ENCODE measurements at regions of chr5 and their contacts with region 1.

Region 1: GRCh38 chr5:137393196-137393993 is 105.7 kb downstream of the SPOCK1 start:
- DNase-seq: peak; percentile 92
- H3K4me3 ChIP-seq: no peak overlapping the region
- H3K27ac ChIP-seq: no peak overlapping the region
- H3K4me1 ChIP-seq: peaks cover 24% of the 10 kb centered on the region
- H3K27me3 ChIP-seq: no peaks in the 10 kb centered on the region
- CTCF ChIP-seq: no peak

Region 2: GRCh38 chr5:137415231-137415681 is 21.9 kb after region 1 on chr5:
- CTCF ChIA-PET with region 1: no interaction called
- dilution Hi-C with region 1: no loop called
- in situ Hi-C with region 1: no loop called
- intact Hi-C with region 1: no loop called
- DNase-seq: peak; percentile 75
- H3K4me3 ChIP-seq: no peak overlapping the region
- H3K27ac ChIP-seq: peak overlapping the region; percentile 28
- H3K4me1 ChIP-seq: peaks cover 15% of the 10 kb centered on the region
- H3K27me3 ChIP-seq: no peaks in the 10 kb centered on the region
- CTCF ChIP-seq: no peak

Region 3: DNA sequence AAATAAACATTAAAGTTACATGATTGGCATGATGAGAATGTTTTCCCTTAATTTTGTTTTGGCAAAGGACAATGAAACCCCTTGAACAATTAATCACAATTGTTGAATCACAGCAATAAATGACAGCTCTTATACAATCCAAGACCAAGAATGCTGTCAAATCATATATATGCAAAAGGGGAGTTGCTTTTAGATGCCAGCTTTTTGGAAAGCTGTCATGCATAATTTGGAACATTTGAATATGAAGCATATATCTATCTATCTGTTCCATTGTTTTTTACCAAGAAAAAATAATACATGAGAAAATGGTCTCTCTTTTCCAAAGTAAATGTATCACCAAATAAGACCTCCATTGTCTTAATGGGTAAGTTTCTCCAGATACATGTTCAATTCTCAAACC is 61.3 kb after region 1 on chr5:
- CTCF ChIA-PET with region 1: no interaction called
- dilution Hi-C with region 1: no loop called
- in situ Hi-C with region 1: no loop called
- intact Hi-C with region 1: loop called (anchors 5 kb)
- DNase-seq: no peak
- H3K4me3 ChIP-seq: no peak overlapping the region
- H3K27ac ChIP-seq: no peak overlapping the region
- H3K4me1 ChIP-seq: no peaks in the 10 kb centered on the region
- H3K27me3 ChIP-seq: peaks cover 3% of the 10 kb centered on the region
- CTCF ChIP-seq: no peak